ENCODE measurements at regions of chr18 and their contacts with region 1.

Region 1: GRCh38 chr18:13566941-13567746 is 159.2 kb downstream of the FAM210A start:
- DNase-seq: peak; percentile 84 to 91
- ATAC-seq: no peak
- H3K4me3 ChIP-seq: no peak overlapping the region
- H3K27ac ChIP-seq: no peak overlapping the region
- H3K4me1 ChIP-seq: peaks cover 0 to 2% of the 10 kb centered on the region in 2 donors
- H3K27me3 ChIP-seq: no peaks in the 10 kb centered on the region

Region 2: DNA sequence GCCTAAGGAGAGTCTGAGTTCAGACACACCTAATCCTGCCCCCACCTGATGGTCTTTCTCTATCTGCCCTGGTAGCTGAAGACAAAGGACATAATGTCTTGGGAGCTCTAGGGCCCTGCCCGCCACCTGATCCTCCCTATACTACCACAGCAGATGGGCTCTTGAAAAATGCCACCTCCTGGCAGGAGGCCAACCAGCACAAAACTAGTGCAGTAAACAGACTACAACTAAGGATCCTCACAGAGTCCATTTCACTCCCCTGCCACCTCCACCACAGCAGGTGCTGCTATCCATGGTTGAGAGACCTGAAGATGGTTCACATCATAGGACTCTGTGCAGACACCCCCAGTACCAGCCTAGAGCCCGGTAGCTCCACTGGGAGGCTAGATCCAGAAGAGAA is 401.1 kb before region 1 on chr18:
- intact Hi-C with region 1: no loop called
- DNase-seq: no peak
- ATAC-seq: no peak
- H3K4me3 ChIP-seq: no peak overlapping the region
- H3K27ac ChIP-seq: no peak overlapping the region
- H3K4me1 ChIP-seq: no peaks in the 10 kb centered on the region
- H3K27me3 ChIP-seq: no peaks in the 10 kb centered on the region

Region 3: GRCh38 chr18:13481820-13482617 is 85.1 kb before region 1 on chr18:
- intact Hi-C with region 1: no loop called
- DNase-seq: peak in 1 of 2 donors; percentile 72
- ATAC-seq: no peak
- H3K4me3 ChIP-seq: no peak overlapping the region
- H3K27ac ChIP-seq: no peak overlapping the region
- H3K4me1 ChIP-seq: no peaks in the 10 kb centered on the region
- H3K27me3 ChIP-seq: no peaks in the 10 kb centered on the region

Region 4: DNA sequence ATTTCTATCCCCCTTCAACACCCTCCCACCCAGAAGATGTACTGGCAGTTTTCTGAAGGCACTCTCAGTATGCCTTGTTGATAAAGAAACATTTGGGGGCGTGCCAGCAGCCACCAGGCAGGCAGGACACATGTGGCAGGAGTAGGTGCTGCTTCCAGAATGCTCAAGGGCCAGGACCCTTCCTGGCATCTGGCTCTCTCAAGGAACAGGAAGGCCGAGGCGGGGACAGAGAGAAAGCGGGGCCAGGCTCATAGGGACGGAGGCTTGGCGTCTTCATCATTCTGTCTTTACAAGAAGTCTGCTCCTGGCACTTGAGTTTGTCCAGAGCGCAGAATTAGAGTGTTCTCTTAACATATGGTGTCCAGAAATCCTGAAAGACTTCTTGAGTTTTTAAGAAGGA is 37.6 kb after region 1 on chr18:
- intact Hi-C with region 1: loop called in 1 of 2 experiments (anchors 5 kb)
- DNase-seq: no peak
- ATAC-seq: no peak
- H3K4me3 ChIP-seq: no peak overlapping the region
- H3K27ac ChIP-seq: no peak overlapping the region
- H3K4me1 ChIP-seq: peaks cover 0 to 3% of the 10 kb centered on the region in 2 donors
- H3K27me3 ChIP-seq: no peaks in the 10 kb centered on the region

Region 5: GRCh38 chr18:13720123-13720522 is 153.0 kb after region 1 on chr18:
- intact Hi-C with region 1: loop called (anchors 5 to 10 kb)
- DNase-seq: no peak
- ATAC-seq: no peak
- H3K4me3 ChIP-seq: no peak overlapping the region
- H3K27ac ChIP-seq: no peak overlapping the region
- H3K4me1 ChIP-seq: no peaks in the 10 kb centered on the region
- H3K27me3 ChIP-seq: no peaks in the 10 kb centered on the region

Region 6: GRCh38 chr18:13726232-13726971 is 159.3 kb after region 1 on chr18 and contains the starts of genes FAM210A and RNMT:
- intact Hi-C with region 1: loop called (anchors 5 to 10 kb)
- DNase-seq: peak; percentile 98 to 99
- ATAC-seq: peak; percentile 99
- H3K4me3 ChIP-seq: peak within 1 kb of the TSS; percentile 71 to 90
- H3K27ac ChIP-seq: peak within 1 kb of the TSS; percentile 49 to 84
- H3K4me1 ChIP-seq: peaks cover 0 to 3% of the 10 kb centered on the region in 2 donors
- H3K27me3 ChIP-seq: no peaks in the 10 kb centered on the region
- total RNA-seq, gene FAM210A: 12.2 to 14.7 TPM
- total RNA-seq, gene RNMT: 25.3 to 30.2 TPM

Region 7: GRCh38 chr18:13800505-13801259 is 233.5 kb after region 1 on chr18:
- intact Hi-C with region 1: loop called in 1 of 2 experiments (anchors 10 kb)
- DNase-seq: peak; percentile 76 to 87
- ATAC-seq: peak; percentile 82
- H3K4me3 ChIP-seq: peak overlapping the region; percentile 4 to 32
- H3K27ac ChIP-seq: no peak overlapping the region
- H3K4me1 ChIP-seq: no peaks in the 10 kb centered on the region
- H3K27me3 ChIP-seq: no peaks in the 10 kb centered on the region

Region 8: GRCh38 chr18:14043903-14044302 is 476.8 kb after region 1 on chr18:
- intact Hi-C with region 1: no loop called
- DNase-seq: no peak
- ATAC-seq: no peak
- H3K4me3 ChIP-seq: no peak overlapping the region
- H3K27ac ChIP-seq: no peak overlapping the region
- H3K4me1 ChIP-seq: no peaks in the 10 kb centered on the region
- H3K27me3 ChIP-seq: no peaks in the 10 kb centered on the region